ENCODE measurements at regions of chr1 and their contacts with region 1.

Region 1: GRCh38 chr1:228734881-228735801 is at the start of gene RHOU:
- DNase-seq: peak; percentile 53 to 84 (median 67)
- ATAC-seq: peak; percentile 87
- H3K4me3 ChIP-seq: peak within 1 kb of the TSS; percentile 44 to 68
- H3K4me3 Mint-ChIP-seq: peak within 1 kb of the TSS; percentile 87
- H3K27ac ChIP-seq: peak within 1 kb of the TSS in 1 of 2 experiments; percentile 33
- H3K27ac Mint-ChIP-seq: peak within 1 kb of the TSS; percentile 49
- H3K4me1 ChIP-seq: peaks cover 4% of the 10 kb centered on the region
- H3K4me1 Mint-ChIP-seq: peaks cover 21% of the 10 kb centered on the region
- H3K27me3 ChIP-seq: no peaks in the 10 kb centered on the region
- H3K27me3 Mint-ChIP-seq: peaks cover 8% of the 10 kb centered on the region
- CTCF ChIP-seq: peak; percentile 73
- total RNA-seq, gene RHOU: 0.39 to 0.57 TPM

Region 2: DNA sequence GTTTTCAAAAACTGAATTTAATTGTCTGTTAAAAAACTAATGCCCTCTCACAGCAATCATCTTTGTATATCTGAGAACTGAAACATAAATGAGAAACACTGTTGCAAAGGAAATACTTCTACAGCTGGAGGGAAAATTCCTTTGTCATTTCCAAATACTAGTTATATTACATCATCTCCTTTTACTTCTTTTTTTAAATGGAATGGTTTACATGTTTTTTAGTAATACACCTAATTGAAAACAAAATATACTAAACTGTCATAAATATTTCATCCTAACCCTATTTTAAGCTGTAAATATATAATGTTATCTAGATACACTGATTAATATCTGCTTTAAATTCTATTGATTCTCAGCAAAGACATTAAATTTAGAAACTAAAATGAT is 1435.9 kb before region 1 on chr1:
- CTCF ChIA-PET with region 1: no interaction called
- POLR2A ChIA-PET with region 1: no interaction called
- intact Hi-C with region 1: no loop called
- DNase-seq: no peak
- ATAC-seq: no peak
- H3K4me3 ChIP-seq: no peak overlapping the region
- H3K4me3 Mint-ChIP-seq: no peak overlapping the region
- H3K27ac ChIP-seq: no peak overlapping the region
- H3K27ac Mint-ChIP-seq: no peak overlapping the region
- H3K4me1 ChIP-seq: no peaks in the 10 kb centered on the region
- H3K4me1 Mint-ChIP-seq: no peaks in the 10 kb centered on the region
- H3K27me3 ChIP-seq: peaks cover 0 to 5% of the 10 kb centered on the region in 2 experiments
- H3K27me3 Mint-ChIP-seq: peaks cover 14% of the 10 kb centered on the region
- CTCF ChIP-seq: no peak

Region 3: DNA sequence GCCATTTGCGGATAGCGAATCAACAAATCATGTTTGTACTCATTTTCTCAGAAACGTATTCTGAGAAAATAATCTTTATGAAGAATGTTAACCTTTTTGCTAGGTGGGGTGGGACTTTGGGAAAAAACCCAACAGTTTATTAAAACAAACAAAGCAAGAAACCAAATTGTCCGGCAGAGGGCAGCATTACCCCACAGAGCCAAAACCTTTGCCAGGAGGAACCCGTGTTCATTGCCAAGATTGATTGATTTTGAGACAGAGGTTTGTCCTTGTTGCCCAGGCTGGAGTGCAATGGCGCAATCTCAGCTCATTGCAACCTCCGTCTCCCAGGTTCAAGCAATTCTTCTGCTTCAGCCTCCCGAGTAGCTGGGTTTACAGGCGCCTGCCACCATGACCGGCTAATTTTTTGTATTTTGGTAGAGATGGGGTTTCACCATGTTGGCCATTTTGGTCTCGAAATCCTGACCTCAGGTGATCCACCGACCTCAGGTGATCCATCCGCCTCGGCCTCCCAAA is 70.7 kb before region 1 on chr1:
- CTCF ChIA-PET with region 1: interaction called, 18 read pairs
- POLR2A ChIA-PET with region 1: no interaction called
- intact Hi-C with region 1: loop called in 1 of 2 experiments (anchors 2 kb)
- DNase-seq: peak; percentile 58 to 86 (median 79)
- ATAC-seq: peak; percentile 48
- H3K4me3 ChIP-seq: no peak overlapping the region
- H3K4me3 Mint-ChIP-seq: no peak overlapping the region
- H3K27ac ChIP-seq: no peak overlapping the region
- H3K27ac Mint-ChIP-seq: no peak overlapping the region
- H3K4me1 ChIP-seq: no peaks in the 10 kb centered on the region
- H3K4me1 Mint-ChIP-seq: peaks cover 3% of the 10 kb centered on the region
- H3K27me3 ChIP-seq: no peaks in the 10 kb centered on the region
- H3K27me3 Mint-ChIP-seq: no peaks in the 10 kb centered on the region
- CTCF ChIP-seq: peak; percentile 90

Region 4: DNA sequence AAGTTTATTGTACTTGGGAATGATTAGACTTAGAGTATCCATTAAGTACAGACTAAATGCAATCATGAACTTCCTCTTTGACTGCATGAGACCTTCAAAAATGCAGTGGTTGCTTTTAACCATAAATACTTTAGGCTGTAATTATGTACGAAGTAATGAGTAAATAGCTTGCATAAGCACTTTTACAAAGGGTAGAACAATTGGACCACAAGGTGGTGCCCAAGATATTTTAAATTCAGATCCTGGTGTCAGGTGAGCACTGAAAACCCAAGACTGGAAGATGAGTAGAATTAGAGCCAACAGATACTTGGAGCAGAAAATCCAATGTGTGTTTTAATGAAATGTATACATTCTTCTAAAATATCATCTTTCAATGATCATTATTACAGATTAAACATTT is 43.2 kb before region 1 on chr1:
- CTCF ChIA-PET with region 1: interaction called, 3 read pairs
- POLR2A ChIA-PET with region 1: no interaction called
- intact Hi-C with region 1: loop called in 1 of 2 experiments (anchors 2 kb)
- DNase-seq: peak in 3 of 9 experiments; percentile 25 to 70 (median 60)
- ATAC-seq: no peak
- H3K4me3 ChIP-seq: no peak overlapping the region
- H3K4me3 Mint-ChIP-seq: no peak overlapping the region
- H3K27ac ChIP-seq: no peak overlapping the region
- H3K27ac Mint-ChIP-seq: no peak overlapping the region
- H3K4me1 ChIP-seq: peaks cover 9% of the 10 kb centered on the region
- H3K4me1 Mint-ChIP-seq: peaks cover 10% of the 10 kb centered on the region
- H3K27me3 ChIP-seq: no peaks in the 10 kb centered on the region
- H3K27me3 Mint-ChIP-seq: peaks cover 5% of the 10 kb centered on the region
- CTCF ChIP-seq: peak; percentile 51

Region 5: GRCh38 chr1:228717081-228717480 is 18.1 kb before region 1 on chr1:
- CTCF ChIA-PET with region 1: no interaction called
- POLR2A ChIA-PET with region 1: no interaction called
- intact Hi-C with region 1: no loop called
- DNase-seq: no peak
- ATAC-seq: no peak
- H3K4me3 ChIP-seq: no peak overlapping the region
- H3K4me3 Mint-ChIP-seq: no peak overlapping the region
- H3K27ac ChIP-seq: no peak overlapping the region
- H3K27ac Mint-ChIP-seq: no peak overlapping the region
- H3K4me1 ChIP-seq: no peaks in the 10 kb centered on the region
- H3K4me1 Mint-ChIP-seq: no peaks in the 10 kb centered on the region
- H3K27me3 ChIP-seq: no peaks in the 10 kb centered on the region
- H3K27me3 Mint-ChIP-seq: peaks cover 12% of the 10 kb centered on the region
- CTCF ChIP-seq: no peak

Region 6: DNA sequence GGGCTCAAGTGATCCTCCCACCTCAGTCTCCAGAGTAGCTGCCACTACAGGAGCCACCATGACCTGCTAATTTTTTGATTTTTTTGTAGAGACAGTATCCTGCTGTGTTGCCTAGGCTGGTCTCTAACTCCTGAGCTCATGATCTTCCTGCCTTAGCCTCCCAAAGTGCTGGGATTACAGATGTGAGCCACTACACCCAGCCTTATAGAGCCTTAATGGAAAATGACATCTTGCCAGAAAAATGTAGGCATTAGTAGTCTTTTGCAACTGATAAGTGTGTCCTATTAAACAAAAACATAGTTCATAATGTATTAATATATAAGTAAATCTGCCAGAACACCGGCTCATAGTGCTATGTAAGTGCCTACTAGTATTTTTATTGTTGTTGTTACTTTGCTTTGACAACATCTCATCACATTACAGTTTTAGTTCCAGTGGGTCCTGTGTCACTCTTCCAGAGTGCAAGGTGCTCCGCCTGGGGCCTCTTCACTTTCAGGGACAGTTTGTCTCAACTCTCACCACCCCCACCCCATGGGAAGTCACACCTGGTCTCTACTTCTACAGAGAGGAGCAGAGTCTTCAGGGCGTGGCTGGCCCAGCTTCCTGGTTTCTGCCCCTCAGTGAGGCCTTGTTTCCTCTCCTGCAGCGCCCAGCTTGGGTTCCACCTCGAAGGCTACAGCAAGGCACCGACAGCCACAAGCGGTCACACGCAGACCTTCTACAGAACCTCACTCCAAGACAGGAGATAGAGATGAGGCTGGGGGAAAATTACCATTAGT is 30.2 kb after region 1 on chr1:
- CTCF ChIA-PET with region 1: no interaction called
- POLR2A ChIA-PET with region 1: no interaction called
- intact Hi-C with region 1: no loop called
- DNase-seq: peak in 5 of 9 experiments; percentile 9 to 74 (median 45)
- ATAC-seq: peak; percentile 26
- H3K4me3 ChIP-seq: no peak overlapping the region
- H3K4me3 Mint-ChIP-seq: no peak overlapping the region
- H3K27ac ChIP-seq: peak overlapping the region in 1 of 2 experiments; percentile 79
- H3K27ac Mint-ChIP-seq: peak overlapping the region; percentile 33
- H3K4me1 ChIP-seq: peaks cover 5% of the 10 kb centered on the region
- H3K4me1 Mint-ChIP-seq: peaks cover 17% of the 10 kb centered on the region
- H3K27me3 ChIP-seq: no peaks in the 10 kb centered on the region
- H3K27me3 Mint-ChIP-seq: no peaks in the 10 kb centered on the region
- CTCF ChIP-seq: no peak

Region 7: GRCh38 chr1:228794173-228794572 is 59.0 kb after region 1 on chr1:
- CTCF ChIA-PET with region 1: interaction called, 4 read pairs
- POLR2A ChIA-PET with region 1: no interaction called
- intact Hi-C with region 1: loop called in 1 of 2 experiments (anchors 5 kb)
- DNase-seq: peak in 2 of 9 experiments; percentile 32 to 66
- ATAC-seq: peak; percentile 69
- H3K4me3 ChIP-seq: peak overlapping the region in 1 of 2 experiments; percentile 3
- H3K4me3 Mint-ChIP-seq: no peak overlapping the region
- H3K27ac ChIP-seq: peak overlapping the region in 1 of 2 experiments; percentile 49
- H3K27ac Mint-ChIP-seq: no peak overlapping the region
- H3K4me1 ChIP-seq: peaks cover 50% of the 10 kb centered on the region
- H3K4me1 Mint-ChIP-seq: peaks cover 25% of the 10 kb centered on the region
- H3K27me3 ChIP-seq: no peaks in the 10 kb centered on the region
- H3K27me3 Mint-ChIP-seq: no peaks in the 10 kb centered on the region
- CTCF ChIP-seq: no peak

Region 8: GRCh38 chr1:229024528-229025130 is 289.5 kb after region 1 on chr1:
- CTCF ChIA-PET with region 1: no interaction called
- POLR2A ChIA-PET with region 1: no interaction called
- intact Hi-C with region 1: no loop called
- DNase-seq: peak in 1 of 9 experiments; percentile 25
- ATAC-seq: no peak
- H3K4me3 ChIP-seq: no peak overlapping the region
- H3K4me3 Mint-ChIP-seq: no peak overlapping the region
- H3K27ac ChIP-seq: no peak overlapping the region
- H3K27ac Mint-ChIP-seq: peak overlapping the region; percentile 27
- H3K4me1 ChIP-seq: peaks cover 10% of the 10 kb centered on the region
- H3K4me1 Mint-ChIP-seq: peaks cover 12% of the 10 kb centered on the region
- H3K27me3 ChIP-seq: no peaks in the 10 kb centered on the region
- H3K27me3 Mint-ChIP-seq: no peaks in the 10 kb centered on the region
- CTCF ChIP-seq: no peak

Region 9: GRCh38 chr1:229156872-229157271 is 421.7 kb after region 1 on chr1:
- CTCF ChIA-PET with region 1: interaction called, 10 read pairs
- POLR2A ChIA-PET with region 1: no interaction called
- intact Hi-C with region 1: loop called in 1 of 2 experiments (anchors 2 kb)
- DNase-seq: peak in 1 of 9 experiments; percentile 28
- ATAC-seq: no peak
- H3K4me3 ChIP-seq: no peak overlapping the region
- H3K4me3 Mint-ChIP-seq: no peak overlapping the region
- H3K27ac ChIP-seq: no peak overlapping the region
- H3K27ac Mint-ChIP-seq: no peak overlapping the region
- H3K4me1 ChIP-seq: peaks cover 11% of the 10 kb centered on the region
- H3K4me1 Mint-ChIP-seq: peaks cover 22% of the 10 kb centered on the region
- H3K27me3 ChIP-seq: no peaks in the 10 kb centered on the region
- H3K27me3 Mint-ChIP-seq: no peaks in the 10 kb centered on the region
- CTCF ChIP-seq: no peak

Region 10: DNA sequence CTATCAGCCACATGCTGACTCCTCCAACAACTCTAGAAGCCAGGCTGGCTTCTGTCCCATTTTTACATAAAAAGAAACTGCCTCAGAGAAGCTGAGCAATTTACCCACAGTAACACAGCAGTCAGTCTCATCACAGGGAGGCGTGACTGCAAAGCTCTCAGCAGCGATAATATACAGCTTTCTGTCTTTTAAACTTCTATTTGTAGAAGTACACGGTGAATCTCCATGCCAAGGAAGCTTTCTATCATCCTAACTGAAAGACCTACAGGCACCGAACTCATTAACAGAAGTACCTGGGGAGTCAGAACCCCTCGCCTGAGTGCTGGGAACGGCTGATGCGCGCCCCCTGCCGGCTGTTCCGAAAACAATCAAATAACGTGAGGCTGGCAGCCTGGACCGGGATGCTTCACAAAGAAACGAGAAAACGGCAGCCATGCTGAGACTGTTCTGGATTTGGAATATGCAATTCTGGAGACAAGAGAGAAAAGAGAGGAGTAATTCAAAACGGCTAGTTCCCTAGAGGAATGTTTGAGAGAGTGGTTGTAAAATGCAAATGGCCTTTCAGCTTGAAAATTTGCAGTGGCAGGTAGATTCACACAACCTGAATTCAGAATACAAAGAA is 492.3 kb after region 1 on chr1:
- CTCF ChIA-PET with region 1: interaction called, 140 read pairs
- POLR2A ChIA-PET with region 1: interaction called, 7 read pairs
- intact Hi-C with region 1: loop called (anchors 1 kb)
- DNase-seq: peak; percentile 68 to 92 (median 81)
- ATAC-seq: peak; percentile 75
- H3K4me3 ChIP-seq: no peak overlapping the region
- H3K4me3 Mint-ChIP-seq: no peak overlapping the region
- H3K27ac ChIP-seq: no peak overlapping the region
- H3K27ac Mint-ChIP-seq: no peak overlapping the region
- H3K4me1 ChIP-seq: no peaks in the 10 kb centered on the region
- H3K4me1 Mint-ChIP-seq: peaks cover 14% of the 10 kb centered on the region
- H3K27me3 ChIP-seq: no peaks in the 10 kb centered on the region
- H3K27me3 Mint-ChIP-seq: peaks cover 6% of the 10 kb centered on the region
- CTCF ChIP-seq: peak; percentile 94

Region 11: GRCh38 chr1:229507951-229508822 is 773.0 kb after region 1 on chr1 and contains the start of gene NUP133:
- CTCF ChIA-PET with region 1: no interaction called
- POLR2A ChIA-PET with region 1: no interaction called
- intact Hi-C with region 1: loop called in 1 of 2 experiments (anchors 10 kb)
- DNase-seq: peak; percentile 96 to 100 (median 99)
- ATAC-seq: peak; percentile 94
- H3K4me3 ChIP-seq: peak within 1 kb of the TSS; percentile 94 to 99
- H3K4me3 Mint-ChIP-seq: peak within 1 kb of the TSS; percentile 87
- H3K27ac ChIP-seq: peak within 1 kb of the TSS; percentile 93 to 97
- H3K27ac Mint-ChIP-seq: peak within 1 kb of the TSS; percentile 99
- H3K4me1 ChIP-seq: peaks cover 20% of the 10 kb centered on the region
- H3K4me1 Mint-ChIP-seq: peaks cover 29% of the 10 kb centered on the region
- H3K27me3 ChIP-seq: no peaks in the 10 kb centered on the region
- H3K27me3 Mint-ChIP-seq: no peaks in the 10 kb centered on the region
- CTCF ChIP-seq: no peak
- total RNA-seq, gene NUP133: 49.0 to 50.7 TPM